Activated B cell treated with CpG ODN at 0.5 μM for 24 hours (primary cell): ENCODE measurements at regions of chr10 and their contacts with region 1.

Region 1: GRCh38 chr10:100518761-100519241 is 860 bp downstream of the SEC31B start:
- DNase-seq: no peak
- ATAC-seq: peak; percentile 54
- H3K4me3 Mint-ChIP-seq: no peak overlapping the region
- H3K27ac Mint-ChIP-seq: no peak overlapping the region
- H3K4me1 Mint-ChIP-seq: peaks cover 9% of the 10 kb centered on the region
- H3K27me3 Mint-ChIP-seq: peaks cover 10% of the 10 kb centered on the region
- CTCF ChIP-seq: no peak

Region 2: GRCh38 chr10:99779335-99779734 is 739.5 kb before region 1 on chr10:
- CTCF ChIA-PET with region 1: no interaction called
- POLR2A ChIA-PET with region 1: no interaction called
- intact Hi-C with region 1: no loop called
- DNase-seq: no peak
- ATAC-seq: no peak
- H3K4me3 Mint-ChIP-seq: no peak overlapping the region
- H3K27ac Mint-ChIP-seq: peak overlapping the region; percentile 1
- H3K4me1 Mint-ChIP-seq: peaks cover 31% of the 10 kb centered on the region
- H3K27me3 Mint-ChIP-seq: no peaks in the 10 kb centered on the region
- CTCF ChIP-seq: no peak

Region 3: DNA sequence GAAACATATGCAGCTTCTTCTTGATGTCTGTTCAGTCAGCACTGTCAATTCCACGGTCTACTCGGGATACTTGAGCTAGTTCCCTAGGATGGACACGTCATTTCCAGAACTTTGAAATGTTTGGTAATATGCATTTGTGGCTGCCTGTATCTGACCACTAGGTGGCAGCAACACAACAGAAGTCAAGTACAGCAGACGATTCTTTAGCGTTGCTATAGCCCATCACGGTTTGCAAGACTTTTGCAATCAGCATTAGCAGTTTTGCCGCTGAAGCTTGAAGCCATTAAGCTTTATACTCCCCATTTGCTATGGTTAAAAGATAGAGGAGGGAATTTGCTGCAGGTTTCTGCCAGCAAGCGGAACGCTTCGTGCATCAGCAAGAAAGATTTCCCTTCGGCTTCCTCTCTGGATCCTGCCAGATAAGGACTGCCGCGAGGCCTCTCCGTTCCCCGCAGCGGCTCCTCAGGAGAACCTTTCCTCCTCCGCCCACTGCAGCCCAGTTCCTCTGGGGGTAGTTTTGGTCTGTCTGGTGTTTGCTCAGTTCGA is 672.9 kb before region 1 on chr10:
- CTCF ChIA-PET with region 1: interaction called, 6 read pairs
- POLR2A ChIA-PET with region 1: no interaction called
- intact Hi-C with region 1: loop called (anchors 5 kb)
- DNase-seq: peak; percentile 28
- ATAC-seq: peak; percentile 77
- H3K4me3 Mint-ChIP-seq: peak overlapping the region; percentile 50
- H3K27ac Mint-ChIP-seq: no peak overlapping the region
- H3K4me1 Mint-ChIP-seq: peaks cover 8% of the 10 kb centered on the region
- H3K27me3 Mint-ChIP-seq: no peaks in the 10 kb centered on the region
- CTCF ChIP-seq: no peak

Region 4: GRCh38 chr10:100303724-100304319 is 215.0 kb before region 1 on chr10:
- CTCF ChIA-PET with region 1: interaction called, 15 read pairs
- POLR2A ChIA-PET with region 1: no interaction called
- intact Hi-C with region 1: loop called (anchors 1 kb)
- DNase-seq: no peak
- ATAC-seq: no peak
- H3K4me3 Mint-ChIP-seq: no peak overlapping the region
- H3K27ac Mint-ChIP-seq: no peak overlapping the region
- H3K4me1 Mint-ChIP-seq: no peaks in the 10 kb centered on the region
- H3K27me3 Mint-ChIP-seq: peaks cover 35% of the 10 kb centered on the region
- CTCF ChIP-seq: peak; percentile 36

Region 5: DNA sequence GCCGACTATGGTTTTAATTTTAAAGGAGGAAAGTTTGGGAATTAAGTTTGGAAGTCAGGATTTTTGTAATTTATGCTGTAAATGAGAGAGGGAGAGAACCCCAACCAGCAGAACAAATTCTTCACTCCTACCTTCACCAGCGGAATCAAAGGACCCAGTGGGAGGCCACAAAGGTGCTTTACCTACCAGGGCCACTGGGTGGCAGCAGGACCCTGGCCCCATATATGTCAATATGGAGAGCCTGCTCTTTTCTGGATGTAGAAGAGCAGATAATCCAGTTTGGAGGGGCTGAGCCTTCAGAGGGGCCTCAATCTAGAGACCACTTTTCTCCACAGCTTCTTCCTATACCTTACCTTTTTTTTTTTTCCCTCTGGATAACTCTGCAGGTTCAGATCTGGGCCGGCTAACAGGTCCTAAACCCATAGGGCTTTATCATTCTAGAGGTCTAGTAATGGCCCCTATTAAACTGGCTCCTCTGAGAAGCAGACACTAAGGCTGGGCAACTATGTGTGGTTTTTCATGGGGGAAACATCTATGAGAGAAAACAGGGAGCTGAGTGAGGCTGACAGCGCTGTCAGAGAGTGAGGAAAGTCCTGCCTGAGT is 180.3 kb before region 1 on chr10:
- CTCF ChIA-PET with region 1: interaction called, 8 read pairs
- POLR2A ChIA-PET with region 1: no interaction called
- intact Hi-C with region 1: loop called (anchors 1 kb)
- DNase-seq: peak; percentile 64
- ATAC-seq: peak; percentile 87
- H3K4me3 Mint-ChIP-seq: peak overlapping the region; percentile 24
- H3K27ac Mint-ChIP-seq: peak overlapping the region; percentile 19
- H3K4me1 Mint-ChIP-seq: peaks cover 25% of the 10 kb centered on the region
- H3K27me3 Mint-ChIP-seq: peaks cover 3% of the 10 kb centered on the region
- CTCF ChIP-seq: no peak

Region 6: GRCh38 chr10:100508691-100509150 is 10.1 kb before region 1 on chr10:
- CTCF ChIA-PET with region 1: interaction called, 15 read pairs
- POLR2A ChIA-PET with region 1: no interaction called
- intact Hi-C with region 1: no loop called
- DNase-seq: no peak
- ATAC-seq: peak; percentile 68
- H3K4me3 Mint-ChIP-seq: no peak overlapping the region
- H3K27ac Mint-ChIP-seq: no peak overlapping the region
- H3K4me1 Mint-ChIP-seq: no peaks in the 10 kb centered on the region
- H3K27me3 Mint-ChIP-seq: no peaks in the 10 kb centered on the region
- CTCF ChIP-seq: no peak

Region 7: DNA sequence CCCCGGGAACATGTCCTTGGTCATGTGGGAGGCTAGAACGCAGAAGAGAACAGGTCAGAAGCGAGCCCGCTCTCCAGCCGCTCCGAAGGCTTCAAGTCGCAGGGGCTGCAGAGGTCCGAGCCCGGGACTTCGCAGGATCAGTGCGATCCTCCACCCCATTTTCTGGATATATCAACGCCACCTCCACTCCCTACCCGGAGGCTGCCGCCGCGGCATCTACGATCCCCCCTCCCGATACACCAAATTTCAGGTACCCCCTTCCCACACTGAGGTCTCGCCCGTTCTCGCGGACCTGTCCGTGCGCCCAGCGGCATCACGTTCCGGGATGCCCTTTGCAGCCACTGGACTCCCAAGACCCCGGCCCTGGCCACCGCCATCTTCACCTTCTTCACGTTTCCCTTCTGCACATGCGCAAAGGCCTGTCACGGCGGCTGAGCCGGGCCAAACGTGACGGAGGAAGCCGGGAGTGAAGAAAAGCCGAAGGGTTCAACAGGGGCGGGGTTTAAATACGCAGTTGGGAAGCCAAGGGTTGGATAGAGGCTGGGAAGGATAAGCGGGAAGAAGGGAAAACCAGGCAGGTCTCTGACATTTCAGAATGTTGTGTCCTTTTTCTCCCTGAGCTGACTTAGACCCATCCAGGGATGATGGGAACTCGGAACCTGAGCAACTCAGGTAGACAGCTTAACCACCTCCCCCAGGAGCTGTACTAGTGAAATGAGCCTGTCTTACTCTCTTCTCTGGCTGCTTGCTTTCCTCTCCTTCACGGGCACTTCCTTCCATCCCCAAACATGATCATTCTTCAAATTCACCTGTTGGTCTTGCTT is 10.9 kb after region 1 on chr10 and contains the start of gene NDUFB8:
- CTCF ChIA-PET with region 1: interaction called, 14 read pairs
- POLR2A ChIA-PET with region 1: no interaction called
- intact Hi-C with region 1: no loop called
- DNase-seq: peak; percentile 77
- ATAC-seq: peak; percentile 85
- H3K4me3 Mint-ChIP-seq: peak within 1 kb of the TSS; percentile 100
- H3K27ac Mint-ChIP-seq: peak within 1 kb of the TSS; percentile 96
- H3K4me1 Mint-ChIP-seq: peaks cover 26% of the 10 kb centered on the region
- H3K27me3 Mint-ChIP-seq: no peaks in the 10 kb centered on the region
- CTCF ChIP-seq: no peak
- total RNA-seq, gene NDUFB8: 191 and 205 TPM in 2 replicates